ENCODE measurements at regions of chr1 and their contacts with region 1.

Region 1: DNA sequence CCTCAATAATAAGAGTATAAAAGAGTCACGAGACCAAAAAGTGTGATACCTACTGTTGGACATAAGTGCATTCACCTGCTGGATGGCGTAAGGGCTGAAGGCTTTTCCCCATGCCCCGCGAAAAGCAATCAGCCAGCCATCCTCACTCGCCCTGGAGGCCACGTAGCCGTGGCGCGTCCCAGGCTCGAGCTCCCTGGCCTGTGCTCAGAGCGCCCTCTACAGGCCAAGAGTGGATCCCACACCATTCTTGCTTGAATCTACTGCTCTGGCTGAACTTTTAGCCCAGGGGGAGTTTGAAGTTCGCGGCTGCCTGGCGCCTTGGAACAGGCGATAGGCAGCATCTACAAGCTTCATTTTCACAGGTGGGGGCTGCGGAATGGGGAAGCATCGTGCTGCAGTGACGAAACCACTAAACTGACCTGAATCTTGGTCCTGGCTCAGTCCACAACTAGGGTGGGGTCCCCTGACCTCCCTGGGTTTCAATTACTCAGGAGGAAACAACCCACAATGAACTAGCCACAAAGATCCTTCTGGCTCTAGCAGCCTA is 70.3 kb upstream of the SERBP1 start:
- DNase-seq: peak; percentile 70
- ATAC-seq: peak; percentile 98
- H3K4me3 Mint-ChIP-seq: no peak overlapping the region
- H3K27ac Mint-ChIP-seq: no peak overlapping the region
- H3K4me1 Mint-ChIP-seq: peaks cover 4% of the 10 kb centered on the region
- H3K27me3 Mint-ChIP-seq: peaks cover 15% of the 10 kb centered on the region
- CTCF ChIP-seq: peak; percentile 80

Region 2: GRCh38 chr1:66764994-66765578 is 735.4 kb before region 1 on chr1:
- CTCF ChIA-PET with region 1: no interaction called
- POLR2A ChIA-PET with region 1: no interaction called
- intact Hi-C with region 1: loop called (anchors 1 kb)
- DNase-seq: no peak
- ATAC-seq: peak; percentile 25
- H3K4me3 Mint-ChIP-seq: no peak overlapping the region
- H3K27ac Mint-ChIP-seq: no peak overlapping the region
- H3K4me1 Mint-ChIP-seq: no peaks in the 10 kb centered on the region
- H3K27me3 Mint-ChIP-seq: no peaks in the 10 kb centered on the region
- CTCF ChIP-seq: no peak

Region 3: DNA sequence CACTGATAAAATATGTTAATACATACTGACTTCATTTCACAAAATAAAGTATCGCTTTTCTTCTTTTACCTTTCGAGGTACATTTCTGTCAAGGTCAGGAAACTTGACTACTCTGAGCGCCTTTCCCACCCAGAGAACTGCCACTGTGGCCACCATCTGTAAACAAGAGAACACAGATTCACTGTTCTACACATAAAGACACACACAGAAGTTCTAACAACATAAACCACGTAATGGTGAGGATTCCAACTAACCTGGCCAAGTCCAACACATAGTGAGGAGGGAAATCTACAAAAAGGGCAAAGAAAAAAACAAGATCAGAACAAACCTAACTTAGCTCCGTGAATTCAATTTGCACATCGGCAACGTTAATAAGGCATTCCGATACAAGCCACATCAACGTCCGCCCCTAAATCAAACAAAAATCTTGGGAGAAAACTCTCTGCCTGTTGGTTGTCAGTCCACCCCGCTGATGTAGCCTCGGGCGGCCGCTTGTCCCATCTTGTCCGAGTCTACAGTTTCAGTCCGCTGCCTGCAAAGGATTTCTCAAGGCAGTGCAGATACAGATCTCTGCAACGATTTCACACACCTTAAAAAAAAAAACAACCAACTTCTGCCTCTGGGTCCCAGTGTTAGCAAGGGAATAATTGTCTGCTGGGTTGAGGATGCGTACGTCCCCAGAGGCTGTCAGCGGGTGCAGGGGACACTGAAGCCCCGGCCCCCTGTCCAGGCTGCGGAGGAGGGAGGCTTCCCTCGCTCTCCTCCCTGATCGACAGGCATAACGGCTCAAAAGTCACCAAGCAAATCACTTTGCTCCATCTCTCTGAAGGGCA is 447.6 kb before region 1 on chr1:
- CTCF ChIA-PET with region 1: no interaction called
- POLR2A ChIA-PET with region 1: no interaction called
- intact Hi-C with region 1: no loop called
- DNase-seq: no peak
- ATAC-seq: no peak
- H3K4me3 Mint-ChIP-seq: peak overlapping the region; percentile 82
- H3K27ac Mint-ChIP-seq: peak overlapping the region; percentile 54
- H3K4me1 Mint-ChIP-seq: peaks cover 21% of the 10 kb centered on the region
- H3K27me3 Mint-ChIP-seq: no peaks in the 10 kb centered on the region
- CTCF ChIP-seq: no peak

Region 4: GRCh38 chr1:67214420-67215174 is 285.9 kb before region 1 on chr1:
- CTCF ChIA-PET with region 1: interaction called, 77 read pairs
- POLR2A ChIA-PET with region 1: no interaction called
- intact Hi-C with region 1: loop called (anchors 1 kb)
- DNase-seq: no peak
- ATAC-seq: peak; percentile 62
- H3K4me3 Mint-ChIP-seq: no peak overlapping the region
- H3K27ac Mint-ChIP-seq: no peak overlapping the region
- H3K4me1 Mint-ChIP-seq: peaks cover 9% of the 10 kb centered on the region
- H3K27me3 Mint-ChIP-seq: no peaks in the 10 kb centered on the region
- CTCF ChIP-seq: no peak

Region 5: DNA sequence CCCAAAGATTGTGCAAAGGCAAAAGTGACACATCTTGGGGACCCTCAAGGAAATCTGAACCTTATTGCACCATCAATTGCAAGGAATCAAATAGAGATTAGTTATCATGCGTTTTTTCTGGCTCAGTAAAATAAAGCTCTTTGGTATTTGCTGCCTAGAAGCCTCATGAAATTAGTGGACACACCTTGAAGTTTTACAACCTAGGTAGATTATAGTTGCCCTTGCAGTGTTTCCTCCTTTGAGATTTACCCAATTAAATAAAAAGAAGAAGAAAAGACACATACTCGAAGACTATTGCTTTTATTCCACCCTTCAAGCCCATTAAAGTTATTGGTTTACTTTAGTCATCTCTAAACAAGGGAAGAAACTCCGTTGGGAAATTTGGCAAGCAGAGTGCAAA is 264.2 kb before region 1 on chr1:
- CTCF ChIA-PET with region 1: interaction called, 50 read pairs
- POLR2A ChIA-PET with region 1: no interaction called
- intact Hi-C with region 1: loop called (anchors 1 kb)
- DNase-seq: no peak
- ATAC-seq: no peak
- H3K4me3 Mint-ChIP-seq: no peak overlapping the region
- H3K27ac Mint-ChIP-seq: no peak overlapping the region
- H3K4me1 Mint-ChIP-seq: no peaks in the 10 kb centered on the region
- H3K27me3 Mint-ChIP-seq: peaks cover 5% of the 10 kb centered on the region
- CTCF ChIP-seq: no peak

Region 6: DNA sequence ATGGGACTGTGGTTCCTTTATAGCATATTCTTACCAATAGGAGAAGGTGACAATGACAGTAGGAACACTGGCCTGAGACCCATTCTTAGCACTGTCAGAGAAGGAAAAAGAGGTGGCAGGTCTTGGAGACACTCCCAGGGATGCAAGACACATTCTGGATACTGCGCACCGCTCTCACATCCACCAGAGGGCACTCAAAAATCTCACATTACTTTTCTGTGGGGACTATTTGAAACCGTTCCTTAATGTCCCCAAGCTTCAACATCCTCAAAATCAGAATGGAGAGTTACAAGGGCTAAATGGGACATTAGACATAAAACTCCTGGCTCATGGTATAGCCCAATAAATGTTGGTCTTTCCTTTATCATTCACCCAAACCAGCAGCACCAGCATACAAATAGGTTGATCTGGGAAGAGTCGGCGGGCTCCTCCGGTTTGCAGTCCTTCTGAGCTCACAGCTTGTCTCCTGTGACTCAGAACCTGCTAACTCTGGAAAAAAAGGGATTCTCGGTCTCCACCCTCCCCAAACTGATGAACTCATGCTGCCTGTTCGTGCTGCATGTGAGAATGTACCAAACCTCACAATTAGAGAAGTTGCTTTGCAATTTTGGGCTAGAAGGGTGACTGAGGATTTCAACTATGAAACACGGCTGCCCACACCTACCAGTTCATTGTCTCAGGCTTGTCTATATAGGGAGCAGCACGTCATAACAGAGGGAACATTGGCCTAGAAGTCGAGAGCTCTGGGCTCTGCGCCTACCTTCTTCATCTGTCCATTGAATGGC is 152.6 kb before region 1 on chr1:
- CTCF ChIA-PET with region 1: interaction called, 24 read pairs
- POLR2A ChIA-PET with region 1: no interaction called
- intact Hi-C with region 1: loop called (anchors 1 kb)
- DNase-seq: no peak
- ATAC-seq: no peak
- H3K4me3 Mint-ChIP-seq: no peak overlapping the region
- H3K27ac Mint-ChIP-seq: no peak overlapping the region
- H3K4me1 Mint-ChIP-seq: peaks cover 7% of the 10 kb centered on the region
- H3K27me3 Mint-ChIP-seq: no peaks in the 10 kb centered on the region
- CTCF ChIP-seq: no peak

Region 7: GRCh38 chr1:67561704-67562113 is 61.2 kb after region 1 on chr1:
- CTCF ChIA-PET with region 1: no interaction called
- POLR2A ChIA-PET with region 1: no interaction called
- intact Hi-C with region 1: no loop called
- DNase-seq: peak; percentile 59
- ATAC-seq: peak; percentile 47
- H3K4me3 Mint-ChIP-seq: no peak overlapping the region
- H3K27ac Mint-ChIP-seq: no peak overlapping the region
- H3K4me1 Mint-ChIP-seq: peaks cover 3% of the 10 kb centered on the region
- H3K27me3 Mint-ChIP-seq: peaks cover 4% of the 10 kb centered on the region
- CTCF ChIP-seq: no peak

Measured in activated B cell treated with CpG ODN at 0.5 μM for 24 hours (primary cell).